WTC11 (cell line): ENCODE measurements at regions of chr4 and their contacts with region 1.

Region 1: DNA sequence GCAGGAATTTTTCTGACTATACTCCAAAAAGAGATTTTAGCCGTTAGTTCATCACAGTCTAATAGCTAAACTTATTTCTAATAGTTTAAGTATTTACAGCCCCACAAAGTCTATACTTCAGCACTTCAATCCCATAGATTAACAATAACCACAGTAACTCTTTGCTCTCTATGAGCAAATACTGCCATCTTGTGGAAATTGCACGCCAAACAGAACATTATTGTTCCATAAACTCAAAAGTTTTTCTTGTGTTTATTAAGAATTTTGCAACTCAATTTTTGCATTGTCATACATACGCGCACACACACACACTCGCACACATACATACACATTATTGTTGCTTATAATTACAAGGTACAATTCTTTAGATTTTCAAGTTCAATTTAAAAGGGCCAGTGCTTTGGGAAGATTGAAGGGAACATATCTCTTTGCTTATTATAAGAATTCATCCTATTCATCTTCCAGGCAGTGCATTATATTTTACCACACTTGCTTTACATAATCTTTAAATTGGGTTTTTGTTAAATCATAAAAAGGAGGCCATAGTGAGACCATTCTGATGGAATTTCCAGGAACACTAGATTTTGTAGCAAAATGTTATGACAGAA is 63.8 kb upstream of the ATOH1 start:
- DNase-seq: no peak
- ATAC-seq: peak; percentile 72
- H3K4me3 Mint-ChIP-seq: no peak overlapping the region
- H3K27ac Mint-ChIP-seq: no peak overlapping the region
- H3K4me1 Mint-ChIP-seq: peaks cover 22% of the 10 kb centered on the region
- H3K27me3 Mint-ChIP-seq: no peaks in the 10 kb centered on the region; the same call in 1 of the 2 replicates
- CTCF ChIP-seq: peak; percentile 65; the same call in 1 of the 2 replicates

Region 2: DNA sequence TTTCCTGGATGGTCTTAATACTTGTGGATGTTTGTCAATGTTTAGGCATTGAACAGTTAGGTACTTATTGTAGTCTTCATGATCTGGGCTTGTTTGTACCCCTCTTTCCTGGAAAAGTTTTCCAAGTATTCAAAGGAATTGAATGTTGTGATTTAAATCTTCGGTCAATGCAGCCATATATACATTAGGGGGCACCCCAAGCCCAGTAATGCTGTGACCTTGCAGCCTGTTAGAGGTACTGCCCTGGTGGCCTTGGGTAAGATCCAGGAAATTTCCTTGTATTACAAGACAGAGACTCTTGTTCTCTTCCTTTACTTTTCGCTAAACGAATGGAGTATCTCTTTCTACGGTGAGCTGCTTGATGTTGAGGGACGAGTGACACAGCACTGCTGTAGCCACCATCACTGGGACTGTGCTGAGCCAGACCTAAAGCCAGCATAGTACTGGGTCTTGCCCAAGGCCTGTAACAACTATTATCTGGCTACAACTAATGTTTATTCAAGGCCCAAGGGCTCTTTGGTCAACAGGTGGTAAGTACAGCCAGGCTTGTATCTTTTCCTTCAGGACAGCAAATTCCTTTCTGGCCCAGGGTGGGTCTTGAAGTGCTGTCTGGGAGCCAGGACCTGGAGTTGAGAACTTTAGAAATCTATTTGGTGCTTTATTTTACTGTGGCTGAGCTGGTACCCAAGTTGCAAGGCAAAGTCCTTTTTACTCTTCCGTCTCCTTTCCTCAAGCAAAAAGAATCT is 54.5 kb before region 1 on chr4:
- CTCF ChIA-PET with region 1: interaction called, 17 read pairs
- POLR2A ChIA-PET with region 1: no interaction called
- DNase-seq: peak; percentile 58
- ATAC-seq: peak; percentile 99
- H3K4me3 Mint-ChIP-seq: no peak overlapping the region
- H3K27ac Mint-ChIP-seq: no peak overlapping the region
- H3K4me1 Mint-ChIP-seq: peaks cover 9% of the 10 kb centered on the region
- H3K27me3 Mint-ChIP-seq: no peaks in the 10 kb centered on the region
- CTCF ChIP-seq: peak; percentile 52